ENCODE measurements at regions of chr11 and their contacts with region 1.

Region 1: DNA sequence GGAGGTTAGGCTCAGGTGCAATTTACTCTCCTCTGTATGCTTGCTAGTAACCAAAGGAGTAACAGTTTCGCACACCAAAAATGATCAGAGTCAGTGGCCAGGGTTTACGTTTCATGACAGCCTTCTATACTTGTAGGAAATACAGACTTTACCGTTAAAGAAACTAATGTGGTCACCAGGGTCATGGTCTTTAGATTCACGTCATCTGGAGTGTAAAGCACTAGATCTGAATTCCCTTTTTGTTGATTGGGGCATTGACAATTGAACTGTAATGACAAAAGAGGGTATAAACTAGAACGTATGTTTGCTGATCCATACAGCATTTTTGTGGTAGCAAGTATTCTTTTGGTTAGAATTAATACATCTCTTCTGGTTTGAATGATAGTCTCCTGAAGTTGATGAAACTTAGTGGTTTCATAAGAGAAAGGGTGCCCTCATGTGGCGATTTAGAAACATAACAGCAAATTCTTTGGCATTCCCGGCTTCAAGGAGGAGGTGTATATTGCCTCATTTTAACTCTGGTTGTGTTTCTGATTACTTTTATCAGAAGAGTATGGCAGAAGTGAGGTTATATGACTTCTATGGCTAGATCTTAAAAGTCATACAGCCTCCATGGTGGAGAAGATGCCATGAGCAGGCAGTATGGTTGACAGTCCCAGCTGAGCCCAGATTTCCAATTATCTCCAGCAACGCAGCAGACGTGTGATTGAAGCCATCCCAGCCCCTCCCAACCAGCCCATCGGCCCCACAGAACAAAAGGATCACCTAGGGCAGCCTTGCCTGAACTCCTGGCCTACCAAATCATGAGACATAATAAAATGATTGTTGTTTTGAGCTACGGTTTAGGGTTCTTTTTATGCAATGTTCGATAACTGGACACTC is 35.1 kb downstream of the MMP7 start:
- DNase-seq: peak in 4 of 5 donors; percentile 8 to 74 (median 61)
- H3K4me3 ChIP-seq: no peak overlapping the region
- H3K4me3 Mint-ChIP-seq: peak overlapping the region in 1 of 7 donors; percentile 48
- H3K27ac ChIP-seq: no peak overlapping the region
- H3K27ac Mint-ChIP-seq: peak overlapping the region in 1 of 8 donors; percentile 23
- H3K4me1 ChIP-seq: peaks cover 5% of the 10 kb centered on the region
- H3K4me1 Mint-ChIP-seq: peaks cover 0 to 8% (median 6%) of the 10 kb centered on the region in 3 donors
- H3K27me3 ChIP-seq: no peaks in the 10 kb centered on the region
- H3K27me3 Mint-ChIP-seq: peaks cover 4 to 29% of the 10 kb centered on the region in 2 donors

Region 2: GRCh38 chr11:102367364-102367763 is 128.0 kb before region 1 on chr11:
- CTCF ChIA-PET with region 1: interaction called, 11 read pairs
- POLR2A ChIA-PET with region 1: no interaction called
- DNase-seq: peak in 2 of 5 donors; percentile 38 to 52
- H3K4me3 ChIP-seq: no peak overlapping the region
- H3K4me3 Mint-ChIP-seq: no peak overlapping the region
- H3K27ac ChIP-seq: no peak overlapping the region
- H3K27ac Mint-ChIP-seq: peak overlapping the region in 7 of 8 donors; percentile 31 to 79 (median 64)
- H3K4me1 ChIP-seq: peaks cover 17% of the 10 kb centered on the region
- H3K4me1 Mint-ChIP-seq: peaks cover 27 to 34% (median 30%) of the 10 kb centered on the region in 3 donors
- H3K27me3 ChIP-seq: no peaks in the 10 kb centered on the region
- H3K27me3 Mint-ChIP-seq: no peaks in the 10 kb centered on the region

Region 3: GRCh38 chr11:102614485-102614884 is 119.1 kb after region 1 on chr11:
- CTCF ChIA-PET with region 1: interaction called, 15 read pairs
- POLR2A ChIA-PET with region 1: no interaction called
- DNase-seq: no peak
- H3K4me3 ChIP-seq: no peak overlapping the region
- H3K4me3 Mint-ChIP-seq: no peak overlapping the region
- H3K27ac ChIP-seq: no peak overlapping the region
- H3K27ac Mint-ChIP-seq: no peak overlapping the region
- H3K4me1 ChIP-seq: no peaks in the 10 kb centered on the region
- H3K4me1 Mint-ChIP-seq: peaks cover 0 to 3% (median 0%) of the 10 kb centered on the region in 3 donors
- H3K27me3 ChIP-seq: no peaks in the 10 kb centered on the region
- H3K27me3 Mint-ChIP-seq: no peaks in the 10 kb centered on the region

Measured in CD8-positive, alpha-beta memory T cell (primary cell).